ENCODE measurements at regions of chr13 and their contacts with region 1.

Region 1: GRCh38 chr13:80363890-80364503 is 23.1 kb upstream of the SPRY2 start:
- DNase-seq: no peak
- H3K4me3 Mint-ChIP-seq: no peak overlapping the region
- H3K27ac Mint-ChIP-seq: no peak overlapping the region
- H3K4me1 Mint-ChIP-seq: peaks cover 2% of the 10 kb centered on the region
- H3K27me3 Mint-ChIP-seq: no peaks in the 10 kb centered on the region

Region 2: DNA sequence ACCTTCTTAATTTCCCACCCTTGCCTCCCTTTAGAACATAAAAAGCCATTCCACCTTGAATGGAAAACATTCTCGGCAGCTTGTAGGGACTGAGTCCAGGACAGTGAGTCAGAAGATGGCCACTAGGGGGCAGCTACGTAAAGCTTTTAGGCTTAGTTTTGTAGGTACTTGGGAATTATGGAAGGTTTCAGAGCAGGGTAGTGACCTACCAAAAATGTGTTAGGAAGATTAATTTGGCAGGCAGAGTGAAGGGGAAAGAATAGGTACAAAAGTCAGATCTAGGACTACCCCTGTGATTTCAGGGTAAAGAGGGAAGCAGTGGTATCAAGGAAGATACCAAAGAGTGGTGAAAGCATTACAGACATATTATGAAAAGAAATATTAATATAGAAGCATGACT is 684.7 kb before region 1 on chr13:
- intact Hi-C with region 1: loop called (anchors 2 kb)
- DNase-seq: no peak
- H3K4me3 Mint-ChIP-seq: no peak overlapping the region
- H3K27ac Mint-ChIP-seq: no peak overlapping the region
- H3K4me1 Mint-ChIP-seq: no peaks in the 10 kb centered on the region
- H3K27me3 Mint-ChIP-seq: peaks cover 10% of the 10 kb centered on the region

Region 3: GRCh38 chr13:80116107-80116506 is 247.9 kb before region 1 on chr13:
- intact Hi-C with region 1: no loop called
- DNase-seq: no peak
- H3K4me3 Mint-ChIP-seq: no peak overlapping the region
- H3K27ac Mint-ChIP-seq: no peak overlapping the region
- H3K4me1 Mint-ChIP-seq: no peaks in the 10 kb centered on the region
- H3K27me3 Mint-ChIP-seq: no peaks in the 10 kb centered on the region

Measured in activated T-helper 2 cell treated with anti-CD3 and anti-CD28 coated beads, Interferon-gamma antibody, Interleukin-2, Interleukin-4, amounts not matched to agents 10 μg/mL and 5 μg/mL and 100 μg/mL, durations not matched to agents 14 hours and 24 hours and 36 hours (primary cell).